GM13976 (cell line): ENCODE measurements at regions of chr4 and their contacts with region 1.

Region 1: GRCh38 chr4:43132010-43132582 is 239.6 kb downstream of the GRXCR1 start:
- DNase-seq: peak; percentile 32
- CTCF ChIP-seq: peak; percentile 90

Region 2: DNA sequence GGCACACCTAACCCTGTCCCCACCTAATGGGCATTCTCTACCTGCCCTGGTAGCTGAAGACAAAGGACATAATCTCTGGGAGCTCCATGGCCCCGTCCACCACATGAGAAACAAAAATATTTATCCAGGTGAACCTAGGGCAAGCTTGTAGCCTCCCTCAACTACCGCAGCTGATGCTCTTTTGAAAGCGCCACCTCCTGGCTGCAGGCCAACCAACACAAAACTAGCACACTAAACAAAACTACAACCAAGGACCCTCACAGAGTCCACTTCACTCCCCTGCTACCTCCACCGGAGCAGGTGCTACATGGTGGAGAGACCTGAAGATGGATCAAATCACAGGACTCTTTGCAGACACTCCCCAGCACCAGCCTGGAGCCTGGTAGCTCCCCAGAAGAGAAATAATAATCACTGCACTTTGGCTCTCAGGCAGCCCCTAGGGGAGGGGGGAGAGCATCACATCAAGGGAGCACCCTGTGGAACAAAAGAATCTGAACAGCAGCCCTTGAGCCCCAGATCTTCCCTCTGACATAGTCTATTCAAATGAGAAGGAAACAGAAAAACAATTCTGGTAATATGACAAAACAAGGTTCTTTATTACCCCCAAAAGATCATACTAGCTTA is 363.9 kb before region 1 on chr4:
- in situ Hi-C with region 1: no loop called
- DNase-seq: no peak
- CTCF ChIP-seq: no peak

Region 3: GRCh38 chr4:43763029-43763610 is 631.0 kb after region 1 on chr4:
- in situ Hi-C with region 1: loop called (anchors 25 kb)
- DNase-seq: no peak
- CTCF ChIP-seq: no peak

Region 4: GRCh38 chr4:44623676-44624075 is 1491.6 kb after region 1 on chr4:
- in situ Hi-C with region 1: loop called (anchors 25 kb)
- DNase-seq: no peak
- CTCF ChIP-seq: no peak